GM18951 (cell line): ENCODE measurements at regions of chr15 and their contacts with region 1.

Region 1: GRCh38 chr15:71743861-71744382 is 66.4 kb upstream of the NR2E3 start:
- POLR2A ChIP-seq: no peak

Region 2: DNA sequence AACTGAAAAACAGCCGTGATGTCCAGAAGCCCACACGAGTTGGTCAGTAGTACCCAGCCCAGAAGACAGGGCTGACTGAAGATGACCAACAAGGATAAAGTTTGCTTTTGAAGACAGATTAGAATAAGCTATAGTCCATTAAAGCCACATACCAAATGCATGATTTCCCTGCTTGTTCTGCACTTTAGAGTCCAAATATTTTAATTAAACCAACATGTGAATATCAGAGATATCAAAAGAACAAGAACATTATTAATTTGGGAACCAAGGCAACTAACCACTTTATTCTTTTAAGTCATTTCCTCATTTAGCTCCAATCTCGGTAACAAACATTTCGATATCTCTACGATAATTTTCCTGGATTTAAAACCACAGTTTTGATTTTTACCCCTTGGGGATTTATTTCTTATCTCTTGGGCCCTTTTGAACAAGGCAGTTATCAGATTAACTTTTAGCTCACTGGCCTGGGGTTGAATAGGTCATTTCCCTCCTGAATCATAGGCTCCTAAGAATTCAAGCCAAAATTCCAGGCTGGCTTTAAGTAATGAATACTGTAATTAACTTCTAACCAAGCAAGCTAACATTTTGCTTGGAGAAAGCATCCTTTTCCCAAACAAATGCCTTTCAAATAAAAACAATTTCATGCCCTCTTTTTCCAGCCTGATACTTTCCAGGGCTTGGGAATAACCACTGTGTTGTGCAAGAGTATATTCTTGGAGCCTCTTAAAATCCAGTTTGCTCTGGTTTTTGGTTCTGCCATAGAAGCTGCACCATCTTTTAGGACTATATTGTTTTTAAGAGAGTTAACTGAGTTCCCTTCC is 36.5 kb before region 1 on chr15:
- in situ Hi-C with region 1: no loop called
- POLR2A ChIP-seq: no peak

Region 3: GRCh38 chr15:72155635-72156616 is 412.0 kb after region 1 on chr15:
- in situ Hi-C with region 1: loop called (anchors 10 kb)
- POLR2A ChIP-seq: no peak